ENCODE measurements at regions of chr14 and their contacts with region 1.

Region 1: GRCh38 chr14:98227000-98227726 is 1044.8 kb downstream of the BCL11B start:
- DNase-seq: peak; percentile 51
- ATAC-seq: peak; percentile 95
- H3K4me3 ChIP-seq: no peak overlapping the region
- H3K27ac ChIP-seq: peak overlapping the region; percentile 75
- H3K4me1 ChIP-seq: peaks cover 5% of the 10 kb centered on the region
- H3K27me3 ChIP-seq: no peaks in the 10 kb centered on the region
- CTCF ChIP-seq: no peak
- EP300 ChIP-seq: peak in 1 of 2 experiments; percentile 54; a peak in 1 of 4 replicates
- POLR2A ChIP-seq: no peak
- RAD21 ChIP-seq: peak; percentile 13; the same call in 1 of the 2 replicates

Region 2: DNA sequence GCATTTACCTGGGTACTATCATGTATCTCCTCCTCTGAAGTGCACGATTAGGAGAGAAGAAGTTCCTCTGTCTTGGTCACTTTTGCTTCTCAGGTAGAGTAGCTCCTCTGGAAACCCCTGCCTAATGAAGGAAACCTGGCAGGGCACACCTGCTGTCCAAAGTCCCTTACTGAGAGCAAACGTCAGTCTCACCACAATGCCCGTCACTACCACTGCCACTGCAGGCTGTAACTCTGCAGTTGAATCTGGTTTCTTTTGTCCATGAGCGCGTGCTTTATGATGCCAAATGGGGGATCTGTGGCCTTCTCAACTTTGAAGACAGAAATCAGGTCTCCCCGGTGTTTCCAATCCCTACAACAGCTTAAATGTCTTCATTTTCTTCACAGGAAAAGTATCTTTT is 23.7 kb before region 1 on chr14:
- CTCF ChIA-PET with region 1: interaction called, 22 read pairs
- POLR2A ChIA-PET with region 1: interaction called, 46 read pairs
- RAD21 ChIA-PET with region 1: interaction called, 82 read pairs
- SMC1A ChIA-PET with region 1: interaction called, 320 read pairs
- in situ Hi-C with region 1: no loop called
- intact Hi-C with region 1: loop called (anchors 1 kb)
- DNase-seq: no peak
- ATAC-seq: no peak
- H3K4me3 ChIP-seq: no peak overlapping the region
- H3K27ac ChIP-seq: no peak overlapping the region
- H3K4me1 ChIP-seq: peaks cover 3% of the 10 kb centered on the region
- H3K27me3 ChIP-seq: no peaks in the 10 kb centered on the region
- CTCF ChIP-seq: no peak
- EP300 ChIP-seq: no peak
- POLR2A ChIP-seq: no peak
- RAD21 ChIP-seq: no peak

Region 3: GRCh38 chr14:98210045-98210672 is 17.0 kb before region 1 on chr14:
- CTCF ChIA-PET with region 1: interaction called, 13 read pairs
- POLR2A ChIA-PET with region 1: interaction called, 46 read pairs
- RAD21 ChIA-PET with region 1: interaction called, 82 read pairs
- SMC1A ChIA-PET with region 1: interaction called, 320 read pairs
- in situ Hi-C with region 1: no loop called
- intact Hi-C with region 1: no loop called
- DNase-seq: no peak
- ATAC-seq: peak; percentile 47
- H3K4me3 ChIP-seq: no peak overlapping the region
- H3K27ac ChIP-seq: no peak overlapping the region
- H3K4me1 ChIP-seq: peaks cover 7% of the 10 kb centered on the region
- H3K27me3 ChIP-seq: no peaks in the 10 kb centered on the region
- CTCF ChIP-seq: no peak
- EP300 ChIP-seq: no peak
- POLR2A ChIP-seq: no peak
- RAD21 ChIP-seq: 0 out of 2 replicates have a peak, but pooled peaks have one; percentile 0

Region 4: GRCh38 chr14:98244162-98244948 is 17.2 kb after region 1 on chr14:
- CTCF ChIA-PET with region 1: interaction called, 5 read pairs
- POLR2A ChIA-PET with region 1: interaction called, 4 read pairs
- RAD21 ChIA-PET with region 1: interaction called, 7 read pairs
- SMC1A ChIA-PET with region 1: interaction called, 12 read pairs
- in situ Hi-C with region 1: no loop called
- intact Hi-C with region 1: no loop called
- DNase-seq: no peak
- ATAC-seq: no peak
- H3K4me3 ChIP-seq: no peak overlapping the region
- H3K27ac ChIP-seq: no peak overlapping the region
- H3K4me1 ChIP-seq: no peaks in the 10 kb centered on the region
- H3K27me3 ChIP-seq: no peaks in the 10 kb centered on the region
- CTCF ChIP-seq: no peak
- EP300 ChIP-seq: no peak
- POLR2A ChIP-seq: no peak
- RAD21 ChIP-seq: no peak

Measured in GM12878 (cell line).